GM12878 (cell line): ENCODE measurements at regions of chr18 and their contacts with region 1.

Region 1: GRCh38 chr18:5036523-5036922 is 160.5 kb downstream of the AKAIN1 start:
- DNase-seq: no peak
- ATAC-seq: peak; percentile 45; the same call in 1 of the 3 replicates
- H3K4me3 ChIP-seq: no peak overlapping the region
- H3K27ac ChIP-seq: no peak overlapping the region
- H3K4me1 ChIP-seq: no peaks in the 10 kb centered on the region
- H3K27me3 ChIP-seq: no peaks in the 10 kb centered on the region
- CTCF ChIP-seq: no peak
- EP300 ChIP-seq: no peak
- POLR2A ChIP-seq: no peak
- RAD21 ChIP-seq: no peak

Region 2: DNA sequence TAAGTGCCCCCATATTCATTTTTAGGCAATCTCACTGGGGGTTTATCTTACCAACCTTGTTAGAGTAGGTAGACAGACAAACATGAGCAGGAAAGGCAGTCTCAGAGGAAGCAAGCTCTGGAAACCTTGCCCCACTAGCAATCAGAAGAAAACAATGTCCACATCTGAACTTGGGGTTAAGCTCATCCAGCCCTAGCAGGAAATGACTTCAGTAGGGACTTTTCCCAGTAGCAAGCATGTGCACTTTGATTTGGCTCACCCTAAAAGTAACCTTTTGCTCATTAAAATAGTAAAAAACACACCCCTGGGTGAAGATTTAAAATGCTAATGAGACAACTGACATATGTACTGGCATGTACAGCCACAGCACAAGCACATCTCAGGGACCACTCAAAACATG is 15.0 kb before region 1 on chr18:
- CTCF ChIA-PET with region 1: interaction called, 50 read pairs
- POLR2A ChIA-PET with region 1: no interaction called
- RAD21 ChIA-PET with region 1: interaction called, 7 read pairs
- SMC1A ChIA-PET with region 1: interaction called, 5 read pairs
- in situ Hi-C with region 1: no loop called
- intact Hi-C with region 1: no loop called
- DNase-seq: no peak
- ATAC-seq: peak; percentile 83
- H3K4me3 ChIP-seq: no peak overlapping the region
- H3K27ac ChIP-seq: no peak overlapping the region
- H3K4me1 ChIP-seq: no peaks in the 10 kb centered on the region
- H3K27me3 ChIP-seq: no peaks in the 10 kb centered on the region
- CTCF ChIP-seq: no peak
- EP300 ChIP-seq: no peak
- POLR2A ChIP-seq: no peak
- RAD21 ChIP-seq: no peak